ENCODE measurements at regions of chr18 and their contacts with region 1.

Region 1: GRCh38 chr18:2571200-2572143 is at the starts of genes METTL4 and NDC80:
- DNase-seq: peak; percentile 71 to 94 (median 78)
- ATAC-seq: peak; percentile 81
- H3K4me3 ChIP-seq: peak within 1 kb of the TSS; percentile 90
- H3K4me3 Mint-ChIP-seq: peak within 1 kb of the TSS; percentile 100
- H3K27ac ChIP-seq: peak within 1 kb of the TSS; percentile 90 to 99
- H3K27ac Mint-ChIP-seq: peak within 1 kb of the TSS; percentile 99
- H3K4me1 ChIP-seq: peaks cover 27% of the 10 kb centered on the region
- H3K4me1 Mint-ChIP-seq: peaks cover 70% of the 10 kb centered on the region
- H3K27me3 ChIP-seq: no peaks in the 10 kb centered on the region
- H3K27me3 Mint-ChIP-seq: no peaks in the 10 kb centered on the region
- CTCF ChIP-seq: no peak
- total RNA-seq, gene METTL4: 6.5 to 10.4 TPM
- total RNA-seq, gene NDC80: 6.3 to 7.5 TPM

Region 2: DNA sequence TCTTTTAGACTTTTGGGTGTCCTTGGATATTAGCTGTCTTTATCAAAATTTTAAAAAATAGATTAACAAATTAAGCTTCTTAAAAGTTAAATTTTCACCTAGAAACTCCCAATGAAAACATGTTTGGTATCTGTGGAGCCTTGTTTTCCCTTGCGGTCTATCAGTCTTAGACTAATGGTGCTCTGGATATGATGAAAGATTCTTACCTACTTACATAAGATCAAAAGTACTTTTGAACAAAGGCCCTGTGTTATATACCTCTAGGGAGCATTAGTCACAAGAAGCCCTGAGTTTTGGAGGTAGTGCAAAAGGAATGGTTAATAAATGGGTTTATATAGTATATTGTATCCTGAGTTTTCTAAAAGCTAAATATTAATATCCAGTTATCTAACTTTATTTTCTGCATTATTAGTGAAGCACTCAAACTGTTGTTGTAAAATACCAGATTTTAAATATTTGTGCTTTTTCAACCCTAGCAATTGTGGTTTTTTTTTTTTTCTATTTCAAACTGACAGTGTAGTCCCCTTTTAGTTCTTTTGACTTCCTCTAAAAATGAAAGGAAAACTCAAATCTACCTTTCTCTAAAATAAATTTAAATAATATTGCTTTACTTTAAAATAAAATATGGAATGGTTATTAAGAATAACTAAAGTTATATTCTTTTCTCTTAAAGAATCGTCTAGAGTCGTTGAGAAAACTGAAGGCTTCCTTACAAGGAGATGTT is 18.0 kb after region 1 on chr18:
- CTCF ChIA-PET with region 1: interaction called, 4 read pairs
- POLR2A ChIA-PET with region 1: interaction called, 30 read pairs
- intact Hi-C with region 1: no loop called
- DNase-seq: peak in 4 of 14 experiments; percentile 7 to 54 (median 50)
- ATAC-seq: peak; percentile 86
- H3K4me3 ChIP-seq: peak overlapping the region; percentile 41
- H3K4me3 Mint-ChIP-seq: peak overlapping the region; percentile 78
- H3K27ac ChIP-seq: peak overlapping the region; percentile 47 to 84
- H3K27ac Mint-ChIP-seq: peak overlapping the region; percentile 89
- H3K4me1 ChIP-seq: peaks cover 15% of the 10 kb centered on the region
- H3K4me1 Mint-ChIP-seq: peaks cover 52% of the 10 kb centered on the region
- H3K27me3 ChIP-seq: no peaks in the 10 kb centered on the region
- H3K27me3 Mint-ChIP-seq: no peaks in the 10 kb centered on the region
- CTCF ChIP-seq: no peak

Region 3: GRCh38 chr18:2641638-2642037 is 70.2 kb after region 1 on chr18:
- CTCF ChIA-PET with region 1: interaction called, 10 read pairs
- POLR2A ChIA-PET with region 1: interaction called, 137 read pairs
- intact Hi-C with region 1: loop called (anchors 1 to 5 kb)
- DNase-seq: peak in 3 of 14 experiments; percentile 71 to 87 (median 76)
- ATAC-seq: peak; percentile 17
- H3K4me3 ChIP-seq: peak overlapping the region; percentile 32
- H3K4me3 Mint-ChIP-seq: peak overlapping the region; percentile 72
- H3K27ac ChIP-seq: peak overlapping the region; percentile 48 to 65
- H3K27ac Mint-ChIP-seq: no peak overlapping the region
- H3K4me1 ChIP-seq: peaks cover 74% of the 10 kb centered on the region
- H3K4me1 Mint-ChIP-seq: peaks cover 55% of the 10 kb centered on the region
- H3K27me3 ChIP-seq: no peaks in the 10 kb centered on the region
- H3K27me3 Mint-ChIP-seq: no peaks in the 10 kb centered on the region
- CTCF ChIP-seq: no peak